ENCODE measurements at regions of chr3 and their contacts with region 1.

Region 1: DNA sequence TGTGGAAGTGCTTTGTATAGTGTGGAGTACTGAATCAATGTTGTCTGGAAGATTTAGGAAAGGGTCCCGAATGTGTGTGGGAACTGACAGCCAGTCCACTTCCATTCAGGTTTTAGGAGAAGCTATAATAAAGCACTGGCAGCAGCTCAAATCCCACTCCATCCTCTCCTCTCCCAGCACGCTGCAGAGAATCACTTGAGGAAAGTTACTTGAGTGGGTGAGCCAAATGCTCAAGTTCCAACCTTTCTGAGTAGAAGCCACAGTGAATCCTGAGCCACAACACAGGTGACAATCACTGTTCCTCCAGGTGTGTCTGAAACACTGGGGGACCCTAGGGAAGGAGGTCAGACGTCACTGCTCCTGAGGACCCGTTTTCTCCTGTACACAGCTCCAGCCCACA is 106.5 kb downstream of the TIGIT start:
- DNase-seq: no peak
- H3K4me3 Mint-ChIP-seq: peak overlapping the region; percentile 43
- H3K27ac Mint-ChIP-seq: peak overlapping the region; percentile 81
- H3K4me1 Mint-ChIP-seq: peaks cover 42% of the 10 kb centered on the region
- H3K27me3 Mint-ChIP-seq: no peaks in the 10 kb centered on the region
- CTCF ChIP-seq: no peak

Region 2: DNA sequence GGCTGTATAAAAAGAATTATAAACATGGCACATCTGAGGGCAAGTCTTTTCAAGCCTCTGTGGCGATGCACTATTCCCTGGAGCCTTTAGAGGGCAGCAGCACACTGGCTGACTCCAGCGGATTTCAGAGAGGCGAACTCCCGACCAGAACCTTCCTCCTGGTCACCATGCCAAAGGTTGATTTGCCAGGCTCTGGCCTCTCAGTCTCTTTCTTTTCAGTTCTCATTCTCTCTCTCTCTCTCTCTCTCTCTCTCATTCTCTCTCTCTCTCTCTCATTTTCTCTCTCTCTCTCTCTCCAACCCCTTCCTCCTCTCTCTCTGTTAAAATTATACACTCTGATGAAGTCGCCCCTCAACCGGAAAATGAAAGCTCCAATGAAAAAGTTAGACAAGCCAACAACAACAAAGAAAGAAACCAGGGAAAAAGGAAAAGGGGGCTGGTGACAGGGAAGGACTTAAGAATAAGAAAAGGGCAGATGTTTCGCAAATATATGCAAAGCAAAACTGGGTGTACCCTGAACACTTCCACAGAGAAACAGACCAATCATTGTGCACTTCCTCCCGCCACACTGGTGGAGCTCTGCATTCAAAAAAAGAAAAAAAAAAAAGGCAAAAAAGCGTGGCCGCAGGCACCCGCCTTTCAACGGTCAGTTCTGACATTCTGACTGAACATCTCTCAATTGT is 16.4 kb before region 1 on chr3:
- CTCF ChIA-PET with region 1: interaction called, 13 read pairs
- intact Hi-C with region 1: no loop called
- DNase-seq: peak; percentile 75
- H3K4me3 Mint-ChIP-seq: peak overlapping the region; percentile 16
- H3K27ac Mint-ChIP-seq: peak overlapping the region; percentile 57
- H3K4me1 Mint-ChIP-seq: no peaks in the 10 kb centered on the region
- H3K27me3 Mint-ChIP-seq: no peaks in the 10 kb centered on the region
- CTCF ChIP-seq: peak; percentile 55

Measured in Calu3 (cell line).